Ascending aorta (tissue), 2 donors: ENCODE measurements at regions of chr12 and their contacts with region 1.

Region 1: DNA sequence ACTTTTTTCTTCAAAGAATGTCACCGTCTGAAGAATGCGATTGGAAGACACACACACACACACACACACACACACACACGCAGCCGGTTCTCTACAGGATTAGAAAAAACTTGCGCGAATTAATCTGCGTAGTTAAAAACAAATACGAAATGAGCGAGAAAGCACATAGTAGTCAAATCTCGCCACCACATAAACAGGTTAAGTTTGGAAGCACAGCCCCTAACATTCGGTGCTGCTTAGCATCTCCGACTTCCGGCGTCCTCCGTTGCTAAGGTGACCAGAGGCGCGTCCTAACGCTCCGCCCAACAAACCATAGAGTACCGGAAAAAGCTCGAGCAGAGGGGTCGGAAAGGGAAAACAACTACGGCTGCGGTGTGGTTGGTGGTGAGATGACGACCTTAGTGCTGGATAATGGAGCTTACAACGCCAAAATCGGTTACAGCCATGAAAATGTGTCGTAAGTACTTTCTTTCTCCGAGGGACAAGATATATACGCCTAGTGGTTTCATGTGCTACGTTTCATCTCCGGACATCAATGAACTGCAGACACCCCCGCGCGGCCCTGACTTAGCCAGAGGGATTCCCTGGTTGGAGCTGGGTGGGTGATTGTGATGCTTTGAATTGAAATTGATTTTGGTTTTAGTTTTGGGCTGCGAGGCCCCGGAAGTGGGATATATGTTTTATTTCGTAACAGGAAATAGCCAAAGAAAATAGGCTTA is at the start of gene ACTR6:
- DNase-seq: peak; percentile 88 to 97
- H3K4me3 ChIP-seq: peak within 1 kb of the TSS; percentile 57 to 93
- H3K27ac ChIP-seq: peak within 1 kb of the TSS; percentile 79 to 92
- H3K4me1 ChIP-seq: peaks cover 7 to 15% of the 10 kb centered on the region in 2 donors
- H3K27me3 ChIP-seq: no peaks in the 10 kb centered on the region
- CTCF ChIP-seq: no peak
- total RNA-seq, gene ACTR6: 7.9 TPM

Region 2: GRCh38 chr12:99984271-99985128 is 216.1 kb before region 1 on chr12 and contains the start of gene ANKS1B:
- intact Hi-C with region 1: loop called (anchors 5 kb)
- DNase-seq: peak in 1 of 2 donors; percentile 82
- H3K4me3 ChIP-seq: peak within 1 kb of the TSS; percentile 74 to 96
- H3K27ac ChIP-seq: peak within 1 kb of the TSS; percentile 79 to 90
- H3K4me1 ChIP-seq: no peaks in the 10 kb centered on the region
- H3K27me3 ChIP-seq: no peaks in the 10 kb centered on the region
- CTCF ChIP-seq: no peak
- total RNA-seq, gene ANKS1B: 8.2 TPM

Region 3: DNA sequence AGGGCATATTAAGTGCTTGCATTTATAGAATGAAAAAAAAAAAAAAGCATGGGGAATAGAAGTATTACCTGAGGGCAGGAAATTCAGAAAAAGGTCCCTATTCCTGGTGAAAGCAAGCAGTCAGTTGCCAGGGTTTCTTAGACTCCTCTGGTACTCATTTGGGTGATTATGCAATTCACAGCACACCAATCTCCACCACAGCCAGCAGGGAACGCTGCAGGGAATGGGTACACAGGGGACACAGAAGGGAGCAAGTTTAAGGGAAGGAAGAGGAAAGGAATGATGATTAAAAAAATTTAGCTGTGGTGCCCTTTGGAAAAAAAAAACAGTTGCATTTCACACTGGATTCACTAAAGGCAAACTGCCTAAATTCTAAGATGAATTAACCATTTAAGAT is 72.1 kb before region 1 on chr12:
- intact Hi-C with region 1: loop called (anchors 2 kb)
- DNase-seq: peak; percentile 30 to 74
- H3K4me3 ChIP-seq: no peak overlapping the region
- H3K27ac ChIP-seq: no peak overlapping the region
- H3K4me1 ChIP-seq: peaks cover 0 to 22% of the 10 kb centered on the region in 2 donors
- H3K27me3 ChIP-seq: no peaks in the 10 kb centered on the region
- CTCF ChIP-seq: peak; percentile 36 to 61 (median 39)

Region 4: GRCh38 chr12:100154474-100155247 is 46.0 kb before region 1 on chr12:
- intact Hi-C with region 1: loop called (anchors 5 kb)
- DNase-seq: peak in 1 of 2 donors; percentile 81
- H3K4me3 ChIP-seq: no peak overlapping the region
- H3K27ac ChIP-seq: no peak overlapping the region
- H3K4me1 ChIP-seq: no peaks in the 10 kb centered on the region
- H3K27me3 ChIP-seq: no peaks in the 10 kb centered on the region
- CTCF ChIP-seq: peak; percentile 47 to 76 (median 75)

Region 5: DNA sequence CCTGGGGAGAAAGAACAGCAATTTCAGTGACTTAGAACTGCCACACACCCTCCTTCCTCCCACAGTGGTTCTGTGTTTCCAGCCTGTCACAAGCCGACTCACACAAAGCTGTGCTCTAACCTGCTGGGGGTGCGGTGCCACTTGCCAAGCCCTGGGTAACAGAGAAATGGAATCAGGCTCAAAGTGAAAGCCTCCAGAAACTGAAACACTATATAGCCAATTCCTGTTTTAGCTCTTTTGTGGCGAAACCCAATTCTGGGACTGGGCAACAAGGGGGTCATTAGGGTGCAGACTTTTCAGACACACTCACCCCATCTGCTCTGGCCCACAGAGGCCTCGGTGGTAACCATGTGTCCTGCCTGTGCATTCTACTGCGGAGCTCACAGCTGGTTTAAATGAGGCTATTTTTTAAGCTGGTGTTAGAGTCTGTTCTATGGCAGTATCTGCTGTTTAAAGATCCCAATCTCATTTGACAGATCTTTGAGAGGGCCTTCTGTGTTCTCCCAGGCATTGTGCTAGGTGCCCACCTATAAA is 15.2 kb before region 1 on chr12:
- intact Hi-C with region 1: no loop called
- DNase-seq: no peak
- H3K4me3 ChIP-seq: peak overlapping the region; percentile 17 to 28
- H3K27ac ChIP-seq: peak overlapping the region; percentile 63 to 79
- H3K4me1 ChIP-seq: peaks cover 0 to 13% of the 10 kb centered on the region in 2 donors
- H3K27me3 ChIP-seq: no peaks in the 10 kb centered on the region
- CTCF ChIP-seq: no peak

Region 6: DNA sequence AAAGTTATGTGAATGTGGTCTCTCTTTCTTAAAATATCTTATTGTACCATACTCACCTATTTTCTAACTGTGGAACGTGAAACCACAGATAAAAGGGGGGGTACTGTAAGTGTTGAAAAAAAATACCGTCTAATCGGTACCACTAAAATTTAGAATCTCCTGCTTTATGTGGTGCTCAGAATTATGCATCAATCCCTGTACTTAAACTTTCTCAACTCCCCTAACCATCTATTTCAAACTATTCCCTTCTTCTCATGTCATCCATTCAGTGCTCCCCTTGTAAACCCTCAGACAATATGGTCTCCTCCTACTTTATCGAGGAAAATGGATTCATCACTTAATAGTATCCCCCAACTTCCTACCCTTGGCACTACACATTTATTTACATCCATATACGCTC is 42.5 kb after region 1 on chr12:
- intact Hi-C with region 1: no loop called
- DNase-seq: no peak
- H3K4me3 ChIP-seq: no peak overlapping the region
- H3K27ac ChIP-seq: no peak overlapping the region
- H3K4me1 ChIP-seq: no peaks in the 10 kb centered on the region
- H3K27me3 ChIP-seq: no peaks in the 10 kb centered on the region
- CTCF ChIP-seq: no peak

Region 7: GRCh38 chr12:100266835-100267618 is 66.4 kb after region 1 on chr12 and contains the starts of genes DEPDC4 and SCYL2:
- intact Hi-C with region 1: loop called (anchors 1 kb)
- DNase-seq: peak; percentile 92 to 98
- H3K4me3 ChIP-seq: peak within 1 kb of the TSS; percentile 95 to 100
- H3K27ac ChIP-seq: peak within 1 kb of the TSS; percentile 97 to 98
- H3K4me1 ChIP-seq: peaks cover 0 to 22% of the 10 kb centered on the region in 2 donors
- H3K27me3 ChIP-seq: no peaks in the 10 kb centered on the region
- CTCF ChIP-seq: no peak
- total RNA-seq, gene DEPDC4: not detected
- total RNA-seq, gene SCYL2: 11.6 TPM